ENCODE measurements at regions of chr6 and their contacts with region 1.

Region 1: DNA sequence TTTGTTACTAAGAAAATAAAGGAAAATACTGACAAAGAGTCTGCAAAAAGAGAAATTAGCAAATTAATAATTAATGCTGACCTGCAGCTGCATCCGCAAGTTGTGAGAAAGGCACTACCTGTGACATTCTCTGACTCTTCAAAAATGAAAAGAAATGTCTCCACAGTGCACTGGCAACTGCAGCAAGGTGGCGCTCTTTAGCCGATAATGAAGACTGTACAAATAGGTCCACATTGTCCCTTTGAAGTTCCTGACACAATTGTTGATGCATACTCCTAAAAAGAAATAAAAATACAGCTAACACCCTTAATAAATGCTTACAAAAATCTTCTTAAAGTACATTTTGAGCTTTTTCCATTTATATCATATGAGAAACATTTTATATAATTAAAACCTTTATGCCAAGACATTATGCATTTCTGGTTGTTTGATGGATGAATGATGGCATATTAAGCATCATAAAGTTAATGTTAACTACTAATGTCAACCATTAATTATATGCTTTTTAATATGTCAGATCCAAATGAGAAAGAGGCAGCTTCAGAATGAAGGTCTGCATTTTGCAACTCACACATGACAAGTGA is 96.5 kb downstream of the MMS22L start:
- DNase-seq: peak; percentile 51 to 61
- H3K4me3 ChIP-seq: no peak overlapping the region
- H3K27ac ChIP-seq: no peak overlapping the region
- H3K4me1 ChIP-seq: peaks cover 0 to 3% (median 0%) of the 10 kb centered on the region in 4 donors
- H3K27me3 ChIP-seq: no peaks in the 10 kb centered on the region
- CTCF ChIP-seq: peak; percentile 56 to 63

Region 2: GRCh38 chr6:96980142-96980541 is 206.4 kb before region 1 on chr6:
- intact Hi-C with region 1: no loop called
- DNase-seq: no peak
- H3K4me3 ChIP-seq: no peak overlapping the region
- H3K27ac ChIP-seq: no peak overlapping the region
- H3K4me1 ChIP-seq: no peaks in the 10 kb centered on the region
- H3K27me3 ChIP-seq: no peaks in the 10 kb centered on the region
- CTCF ChIP-seq: no peak

Region 3: GRCh38 chr6:97399208-97399607 is 212.7 kb after region 1 on chr6:
- intact Hi-C with region 1: loop called (anchors 5 kb)
- DNase-seq: no peak
- H3K4me3 ChIP-seq: no peak overlapping the region
- H3K27ac ChIP-seq: no peak overlapping the region
- H3K4me1 ChIP-seq: no peaks in the 10 kb centered on the region
- H3K27me3 ChIP-seq: no peaks in the 10 kb centered on the region
- CTCF ChIP-seq: no peak